Posterior cingulate gyrus (tissue), 11 donors: ENCODE measurements at regions of chr6 and their contacts with region 1.

Region 1: GRCh38 chr6:29942275-29943052 is at the start of gene HLA-A:
- DNase-seq: peak; percentile 70 to 98 (median 89)

Region 2: GRCh38 chr6:29965873-29966601 is 23.6 kb after region 1 on chr6:
- intact Hi-C with region 1: loop called (anchors 2 kb)
- DNase-seq: peak in 9 of 10 donors; percentile 54 to 92 (median 67)